ENCODE measurements at regions of chr13 and their contacts with region 1.

Region 1: GRCh38 chr13:51125498-51126226 is 14.6 kb upstream of the C13orf42 start:
- DNase-seq: peak; percentile 54
- ATAC-seq: peak; percentile 90
- H3K4me3 ChIP-seq: no peak overlapping the region
- H3K27ac ChIP-seq: no peak overlapping the region
- H3K4me1 ChIP-seq: no peaks in the 10 kb centered on the region
- H3K27me3 ChIP-seq: peaks cover 2% of the 10 kb centered on the region; the same call in 1 of the 2 replicates
- CTCF ChIP-seq: peak; percentile 72
- POLR2A ChIP-seq: no peak
- RAD21 ChIP-seq: peak; percentile 77

Region 2: GRCh38 chr13:50936679-50937078 is 189.0 kb before region 1 on chr13:
- CTCF ChIA-PET with region 1: no interaction called
- POLR2A ChIA-PET with region 1: no interaction called
- dilution Hi-C with region 1: no loop called
- in situ Hi-C with region 1: no loop called
- intact Hi-C with region 1: no loop called
- DNase-seq: no peak
- ATAC-seq: no peak
- H3K4me3 ChIP-seq: no peak overlapping the region
- H3K27ac ChIP-seq: no peak overlapping the region
- H3K4me1 ChIP-seq: no peaks in the 10 kb centered on the region
- H3K27me3 ChIP-seq: no peaks in the 10 kb centered on the region
- CTCF ChIP-seq: no peak
- POLR2A ChIP-seq: no peak
- RAD21 ChIP-seq: no peak

Region 3: DNA sequence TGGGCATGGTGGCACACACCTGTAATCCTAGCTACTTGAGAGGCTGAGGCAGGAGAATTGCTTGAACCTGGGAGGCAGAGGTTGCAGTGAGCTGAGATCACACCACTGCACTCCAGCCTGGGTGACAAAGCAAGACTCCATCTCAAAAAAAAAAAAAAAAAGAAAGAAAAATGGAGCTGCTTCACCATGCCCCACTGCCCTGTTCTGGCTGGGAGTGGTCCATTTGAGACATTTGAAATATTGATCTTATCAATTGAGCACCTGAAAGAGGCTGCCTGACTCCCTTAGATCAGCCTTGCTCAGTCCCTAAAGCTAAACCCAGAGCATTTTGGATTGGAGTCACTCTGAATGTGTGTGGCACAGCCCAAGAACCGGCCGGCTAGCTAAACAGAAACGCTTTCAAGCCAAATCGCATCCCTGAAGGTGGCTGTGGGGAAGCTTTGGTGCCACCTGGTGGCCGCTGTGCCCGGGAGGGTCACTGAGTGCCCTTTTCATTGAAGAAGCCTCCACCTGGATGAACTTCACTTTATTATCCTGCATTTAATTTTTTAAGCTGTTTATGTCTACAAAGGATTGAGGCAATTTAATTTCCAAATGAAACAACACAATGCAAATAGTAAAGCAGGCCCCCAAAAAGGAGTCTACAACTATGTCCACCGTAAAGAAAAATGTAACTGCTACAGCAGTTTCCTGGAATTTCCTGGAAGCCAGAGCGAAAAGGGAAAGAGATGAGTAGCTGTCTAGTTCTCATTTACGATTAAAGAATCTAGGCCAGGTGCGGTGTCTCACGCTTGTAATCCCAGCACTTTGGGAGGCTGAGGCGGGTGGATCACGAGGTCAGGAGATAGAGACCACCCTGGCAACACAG is 160.7 kb after region 1 on chr13:
- CTCF ChIA-PET with region 1: interaction called, 23 read pairs
- POLR2A ChIA-PET with region 1: no interaction called
- dilution Hi-C with region 1: no loop called
- in situ Hi-C with region 1: loop called (anchors 10 kb)
- intact Hi-C with region 1: loop called (anchors 1 kb)
- DNase-seq: peak; percentile 43
- ATAC-seq: peak; percentile 98
- H3K4me3 ChIP-seq: no peak overlapping the region
- H3K27ac ChIP-seq: no peak overlapping the region
- H3K4me1 ChIP-seq: no peaks in the 10 kb centered on the region; the same call in 1 of the 2 replicates
- H3K27me3 ChIP-seq: peaks cover 18% of the 10 kb centered on the region
- CTCF ChIP-seq: peak; percentile 81
- POLR2A ChIP-seq: no peak
- RAD21 ChIP-seq: peak; percentile 81

Region 4: DNA sequence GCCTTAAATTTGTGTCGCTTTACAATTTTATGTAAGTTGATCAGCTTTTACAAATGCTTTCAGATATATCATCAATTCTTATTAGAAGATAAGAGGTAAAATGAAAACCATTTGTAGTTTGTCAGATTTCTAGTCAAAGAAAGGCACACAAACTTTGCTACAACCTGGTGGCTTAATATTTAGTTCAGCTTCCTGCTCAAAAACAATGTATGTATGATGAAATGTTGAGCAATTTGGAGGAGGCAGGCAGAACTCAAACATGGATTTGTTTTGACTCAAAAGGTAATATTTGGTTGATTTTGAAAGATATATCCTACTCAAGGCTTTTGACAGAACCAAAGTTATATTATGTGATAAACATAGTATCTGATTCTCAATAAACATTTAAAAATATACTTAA is 979.0 kb after region 1 on chr13:
- CTCF ChIA-PET with region 1: no interaction called
- POLR2A ChIA-PET with region 1: no interaction called
- dilution Hi-C with region 1: no loop called
- in situ Hi-C with region 1: loop called (anchors 25 kb)
- intact Hi-C with region 1: no loop called
- DNase-seq: peak; percentile 7
- ATAC-seq: no peak
- H3K4me3 ChIP-seq: no peak overlapping the region
- H3K27ac ChIP-seq: no peak overlapping the region
- H3K4me1 ChIP-seq: no peaks in the 10 kb centered on the region
- H3K27me3 ChIP-seq: no peaks in the 10 kb centered on the region; the same call in 1 of the 2 replicates
- CTCF ChIP-seq: no peak
- POLR2A ChIP-seq: no peak
- RAD21 ChIP-seq: no peak